A673 (cell line): ENCODE measurements at regions of chr16 and their contacts with region 1.

Region 1: DNA sequence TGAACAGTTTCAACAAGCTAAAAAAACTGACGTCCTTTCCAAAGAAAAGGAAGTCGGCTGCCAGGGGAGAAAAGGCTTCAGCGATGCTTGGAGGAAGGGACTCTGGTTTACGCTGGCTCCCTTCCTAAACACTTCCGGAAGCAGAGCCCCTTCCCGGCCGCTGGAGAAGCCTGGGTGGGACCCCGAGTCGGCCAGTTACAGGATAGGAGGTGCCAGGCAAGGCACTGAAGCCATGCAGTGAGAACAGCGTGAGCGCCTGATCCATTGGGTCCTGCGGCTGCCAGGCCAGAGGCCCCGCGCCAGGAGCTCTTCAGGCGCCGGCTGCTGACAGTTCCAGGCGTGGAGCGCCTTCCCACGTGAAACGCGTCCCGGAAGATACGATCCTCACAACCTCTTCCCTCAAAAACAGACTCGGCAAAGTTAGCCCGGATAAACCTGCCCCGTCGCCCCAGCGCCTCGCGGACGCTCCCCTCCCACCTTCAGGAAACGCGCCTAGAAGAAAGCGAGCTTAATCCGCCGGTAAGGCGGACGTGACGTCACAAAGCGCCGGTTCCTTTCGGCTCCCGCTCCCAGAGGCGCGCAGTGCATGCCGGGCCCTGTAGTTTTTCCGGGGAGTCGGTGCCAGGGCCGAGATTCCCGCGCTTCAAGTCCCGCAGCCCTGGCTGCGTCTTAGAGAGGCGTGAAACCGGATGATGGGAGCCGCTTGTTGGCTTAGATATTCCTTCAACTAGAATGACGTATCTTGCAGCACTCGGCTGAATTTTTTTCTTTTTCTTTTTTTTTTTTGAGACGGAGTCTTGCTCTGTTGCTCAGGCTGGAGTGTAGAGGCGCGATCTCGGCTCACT is at the start of gene ADAT1:
- DNase-seq: peak; percentile 99
- H3K4me3 ChIP-seq: peak within 1 kb of the TSS; percentile 70
- H3K27ac ChIP-seq: peak within 1 kb of the TSS; percentile 91
- H3K4me1 ChIP-seq: peaks cover 16% of the 10 kb centered on the region
- H3K27me3 ChIP-seq: no peaks in the 10 kb centered on the region
- CTCF ChIP-seq: no peak
- total RNA-seq, gene ADAT1: 65.3 and 79.7 TPM in 2 replicates

Region 2: GRCh38 chr16:75464130-75464918 is 158.7 kb before region 1 on chr16 and contains the start of gene TMEM170A:
- CTCF ChIA-PET with region 1: no interaction called
- POLR2A ChIA-PET with region 1: no interaction called
- intact Hi-C with region 1: loop called (anchors 2 kb)
- DNase-seq: peak; percentile 99
- H3K4me3 ChIP-seq: peak within 1 kb of the TSS; percentile 76
- H3K27ac ChIP-seq: peak within 1 kb of the TSS; percentile 92
- H3K4me1 ChIP-seq: peaks cover 2% of the 10 kb centered on the region
- H3K27me3 ChIP-seq: no peaks in the 10 kb centered on the region
- CTCF ChIP-seq: peak; percentile 100
- total RNA-seq, gene TMEM170A: 25.9 and 30.4 TPM in 2 replicates

Region 3: DNA sequence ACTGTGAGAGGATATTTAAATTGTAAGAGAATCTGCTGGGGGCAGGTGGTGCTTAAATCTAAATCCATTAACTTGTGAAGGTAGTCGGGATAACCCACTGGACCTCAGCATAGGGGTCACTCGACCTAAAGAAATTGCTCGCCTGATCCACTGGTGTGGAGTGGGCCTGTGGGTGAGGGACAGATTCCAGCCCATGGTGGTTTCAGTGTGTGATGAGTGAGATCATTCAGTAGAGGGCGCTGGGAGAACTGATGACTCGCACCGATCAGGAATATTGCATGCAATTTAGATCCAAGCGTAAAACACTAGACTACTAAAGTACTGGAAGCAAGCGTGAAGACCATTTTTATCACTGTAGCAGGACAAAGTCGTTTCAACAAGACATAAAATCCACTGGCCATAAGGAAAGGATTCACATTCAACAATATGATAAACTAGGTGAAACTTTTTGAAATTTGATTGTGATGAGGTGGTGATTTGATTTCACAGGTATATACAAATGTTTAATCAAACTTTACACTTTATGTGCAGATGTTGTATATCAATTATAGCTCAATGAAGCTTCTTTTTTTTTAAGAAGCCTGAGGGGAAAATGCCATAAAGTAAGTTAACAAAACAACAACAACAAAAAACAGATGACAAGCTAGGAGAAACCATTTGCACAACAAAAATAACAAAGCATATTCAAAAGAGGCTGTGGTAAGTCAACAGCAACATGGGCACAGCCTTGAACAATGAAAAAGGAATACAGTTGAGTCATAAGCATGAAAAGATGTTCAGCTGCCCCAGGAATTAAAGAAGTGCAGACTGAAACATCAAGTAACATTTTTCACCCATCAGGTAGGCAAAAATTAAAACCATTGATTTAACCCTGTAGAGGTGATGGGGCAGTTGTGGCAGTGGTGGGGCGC is 151.0 kb before region 1 on chr16:
- CTCF ChIA-PET with region 1: interaction called, 4 read pairs
- POLR2A ChIA-PET with region 1: no interaction called
- intact Hi-C with region 1: loop called (anchors 1 kb)
- DNase-seq: peak; percentile 70
- H3K4me3 ChIP-seq: no peak overlapping the region
- H3K27ac ChIP-seq: no peak overlapping the region
- H3K4me1 ChIP-seq: no peaks in the 10 kb centered on the region
- H3K27me3 ChIP-seq: no peaks in the 10 kb centered on the region
- CTCF ChIP-seq: peak; percentile 88

Region 4: GRCh38 chr16:75584108-75584507 is 38.9 kb before region 1 on chr16:
- CTCF ChIA-PET with region 1: no interaction called
- POLR2A ChIA-PET with region 1: no interaction called
- intact Hi-C with region 1: no loop called
- DNase-seq: no peak
- H3K4me3 ChIP-seq: no peak overlapping the region
- H3K27ac ChIP-seq: no peak overlapping the region
- H3K4me1 ChIP-seq: no peaks in the 10 kb centered on the region
- H3K27me3 ChIP-seq: no peaks in the 10 kb centered on the region
- CTCF ChIP-seq: no peak

Region 5: GRCh38 chr16:75647492-75648264 is 24.7 kb after region 1 on chr16 and contains the starts of genes KARS1 and TERF2IP:
- CTCF ChIA-PET with region 1: no interaction called
- POLR2A ChIA-PET with region 1: no interaction called
- intact Hi-C with region 1: loop called (anchors 2 kb)
- DNase-seq: peak; percentile 96
- H3K4me3 ChIP-seq: peak within 1 kb of the TSS; percentile 95
- H3K27ac ChIP-seq: peak within 1 kb of the TSS; percentile 86
- H3K4me1 ChIP-seq: peaks cover 27% of the 10 kb centered on the region
- H3K27me3 ChIP-seq: no peaks in the 10 kb centered on the region
- CTCF ChIP-seq: no peak
- total RNA-seq, gene KARS1: 244 and 253 TPM in 2 replicates
- total RNA-seq, gene TERF2IP: 43.0 and 48.5 TPM in 2 replicates

Region 6: DNA sequence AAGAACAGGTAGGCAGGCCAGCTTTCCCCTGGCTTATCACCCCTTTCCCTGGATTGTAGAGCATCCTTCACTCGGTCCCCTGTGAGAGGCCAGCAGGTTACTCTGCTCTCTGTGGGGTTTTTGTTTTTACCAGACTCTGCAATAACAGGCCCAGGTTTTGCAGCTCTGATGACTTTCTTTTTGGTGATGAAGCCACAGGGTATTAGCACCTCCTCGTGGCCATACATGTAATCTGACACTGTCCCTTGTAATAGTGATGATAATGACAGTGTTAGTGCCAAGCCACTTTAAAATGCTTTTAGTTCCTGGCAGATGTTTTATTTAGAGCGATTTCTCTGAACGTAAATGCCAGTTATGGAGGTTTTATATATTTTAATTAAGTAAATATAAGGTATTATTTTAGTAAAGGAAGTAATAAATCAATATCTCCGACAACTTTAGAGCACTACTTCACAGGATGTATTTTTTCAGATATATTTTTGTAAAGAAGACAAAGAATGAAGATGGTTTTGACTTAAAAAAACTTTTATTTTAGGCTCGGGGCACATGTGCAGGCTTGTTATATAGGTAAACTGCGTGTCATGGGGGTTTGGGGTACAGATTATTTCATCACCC is 141.3 kb after region 1 on chr16:
- CTCF ChIA-PET with region 1: no interaction called
- POLR2A ChIA-PET with region 1: no interaction called
- intact Hi-C with region 1: loop called (anchors 5 kb)
- DNase-seq: peak; percentile 69
- H3K4me3 ChIP-seq: no peak overlapping the region
- H3K27ac ChIP-seq: no peak overlapping the region
- H3K4me1 ChIP-seq: no peaks in the 10 kb centered on the region
- H3K27me3 ChIP-seq: no peaks in the 10 kb centered on the region
- CTCF ChIP-seq: peak; percentile 89

Region 7: GRCh38 chr16:77171745-77172635 is 1549.0 kb after region 1 on chr16:
- CTCF ChIA-PET with region 1: no interaction called
- POLR2A ChIA-PET with region 1: interaction called, 22 read pairs
- intact Hi-C with region 1: no loop called
- DNase-seq: peak; percentile 74
- H3K4me3 ChIP-seq: no peak overlapping the region
- H3K27ac ChIP-seq: no peak overlapping the region
- H3K4me1 ChIP-seq: no peaks in the 10 kb centered on the region
- H3K27me3 ChIP-seq: peaks cover 25% of the 10 kb centered on the region
- CTCF ChIP-seq: peak; percentile 73